ENCODE measurements at regions of chr5 and their contacts with region 1.

Region 1: DNA sequence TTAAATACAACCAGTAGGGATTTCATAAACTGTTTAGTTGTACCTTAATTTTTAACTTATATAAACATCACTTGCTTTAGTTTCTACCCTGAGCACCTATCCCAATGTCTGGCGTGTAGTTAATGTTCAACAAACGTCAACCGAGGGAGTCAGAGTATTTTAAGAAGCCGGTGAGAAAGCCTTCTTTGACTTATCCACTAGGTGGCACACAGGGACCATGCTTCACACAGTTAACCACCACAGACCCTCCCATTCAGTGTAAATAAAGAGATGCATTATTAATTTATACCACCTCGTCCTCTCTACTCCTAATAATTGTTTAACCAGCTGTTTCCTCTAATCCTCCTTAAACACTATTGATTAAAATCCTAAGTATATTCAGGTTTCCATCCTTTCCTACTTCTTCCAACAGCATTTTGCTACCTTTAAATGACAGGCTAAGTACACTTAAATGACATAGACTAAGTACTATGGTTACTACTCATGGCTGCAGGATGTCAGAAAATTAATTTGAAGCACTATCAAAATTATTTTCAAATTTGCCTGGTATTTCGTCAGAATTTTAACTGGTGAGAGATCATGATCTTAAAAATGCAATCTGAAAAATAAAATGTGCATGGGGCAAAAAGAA is 2.3 kb downstream of the HAPLN1 start:
- DNase-seq: peak; percentile 72
- ATAC-seq: peak; percentile 37
- H3K4me3 ChIP-seq: no peak overlapping the region
- H3K27ac ChIP-seq: no peak overlapping the region
- H3K4me1 ChIP-seq: peaks cover 28% of the 10 kb centered on the region
- H3K27me3 ChIP-seq: no peaks in the 10 kb centered on the region
- CTCF ChIP-seq: peak; percentile 82

Region 2: DNA sequence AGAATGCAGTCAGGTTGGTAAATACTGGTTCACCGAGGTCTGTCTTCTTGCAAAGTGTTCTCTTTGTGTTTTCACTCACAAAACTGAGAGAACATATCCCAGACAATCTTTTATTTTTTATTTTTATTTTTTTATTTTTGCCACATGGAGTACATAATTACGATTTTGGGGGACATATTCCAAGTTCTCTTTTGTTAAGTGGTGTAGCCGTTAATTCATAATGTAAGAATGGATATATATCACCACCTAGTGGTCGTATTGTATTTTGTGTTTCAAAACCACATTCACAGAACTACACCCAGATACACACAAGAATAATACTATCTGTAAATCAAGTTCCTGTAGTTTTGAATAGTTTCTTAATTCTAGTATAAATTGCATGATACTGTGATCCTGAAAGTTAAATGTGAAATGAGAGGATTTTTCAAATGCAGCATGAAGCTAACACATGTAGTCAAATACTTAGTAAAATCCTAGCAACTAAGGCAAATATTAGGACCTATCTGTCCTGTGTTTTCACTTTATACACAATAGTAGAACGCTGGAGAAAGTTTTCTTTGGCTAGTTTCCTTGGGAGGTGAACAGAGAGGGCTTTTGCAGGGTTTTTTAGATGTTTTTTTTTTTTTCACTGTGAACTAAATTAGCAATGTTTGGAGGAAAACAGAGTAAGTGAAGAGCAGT is 154.1 kb before region 1 on chr5:
- CTCF ChIA-PET with region 1: no interaction called
- POLR2A ChIA-PET with region 1: no interaction called
- intact Hi-C with region 1: no loop called
- DNase-seq: peak; percentile 70
- ATAC-seq: peak; percentile 63
- H3K4me3 ChIP-seq: peak overlapping the region; percentile 38; the same call in 1 of the 2 replicates
- H3K27ac ChIP-seq: peak overlapping the region; percentile 61
- H3K4me1 ChIP-seq: peaks cover 35% of the 10 kb centered on the region
- H3K27me3 ChIP-seq: no peaks in the 10 kb centered on the region
- CTCF ChIP-seq: peak; percentile 75

Region 3: GRCh38 chr5:83919071-83920041 is 201.0 kb after region 1 on chr5:
- CTCF ChIA-PET with region 1: interaction called, 4 read pairs
- POLR2A ChIA-PET with region 1: no interaction called
- intact Hi-C with region 1: loop called (anchors 5 kb)
- DNase-seq: no peak
- ATAC-seq: no peak
- H3K4me3 ChIP-seq: no peak overlapping the region
- H3K27ac ChIP-seq: no peak overlapping the region
- H3K4me1 ChIP-seq: no peaks in the 10 kb centered on the region; the same call in 1 of the 2 replicates
- H3K27me3 ChIP-seq: no peaks in the 10 kb centered on the region
- CTCF ChIP-seq: no peak

Region 4: DNA sequence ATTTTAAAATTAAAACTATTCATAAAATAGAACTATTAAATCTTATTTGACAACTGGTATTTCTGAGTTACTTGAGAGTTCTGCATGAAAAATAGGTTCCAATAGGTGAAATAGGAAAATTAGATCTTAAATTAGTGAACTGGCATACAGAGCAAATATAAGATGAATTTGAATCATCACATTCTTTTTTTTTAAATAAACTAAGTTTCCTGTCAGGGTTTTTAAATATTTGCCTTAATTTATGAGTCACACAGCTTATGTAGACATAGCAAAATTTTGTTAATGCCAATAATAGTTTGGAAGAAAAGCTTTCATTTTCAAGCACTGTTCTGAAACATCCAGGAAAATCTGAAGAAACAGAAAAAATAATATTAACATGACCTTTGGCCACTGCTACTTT is 314.0 kb after region 1 on chr5:
- CTCF ChIA-PET with region 1: no interaction called
- POLR2A ChIA-PET with region 1: no interaction called
- intact Hi-C with region 1: loop called (anchors 5 kb)
- DNase-seq: peak; percentile 68
- ATAC-seq: peak; percentile 82
- H3K4me3 ChIP-seq: no peak overlapping the region
- H3K27ac ChIP-seq: peak overlapping the region; percentile 90
- H3K4me1 ChIP-seq: peaks cover 34% of the 10 kb centered on the region
- H3K27me3 ChIP-seq: no peaks in the 10 kb centered on the region
- CTCF ChIP-seq: no peak

Region 5: DNA sequence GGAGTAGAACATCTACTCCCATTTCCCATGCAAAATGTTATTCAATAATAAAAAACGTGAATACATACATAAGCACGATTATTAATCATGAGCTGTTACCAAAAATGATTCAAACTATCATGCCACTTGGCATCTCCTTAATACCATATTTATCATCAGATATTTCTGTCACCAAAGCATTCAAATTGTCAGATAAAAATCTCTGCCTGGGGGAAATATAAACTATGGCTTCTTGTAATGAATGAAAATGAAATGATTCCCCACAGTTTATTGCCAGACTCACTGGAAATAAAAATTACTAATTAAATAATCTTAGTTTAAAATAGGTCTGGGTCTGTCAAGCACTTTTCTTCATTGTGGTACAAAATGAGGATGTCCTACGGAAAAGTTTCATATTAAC is 400.9 kb after region 1 on chr5:
- CTCF ChIA-PET with region 1: interaction called, 20 read pairs
- POLR2A ChIA-PET with region 1: no interaction called
- intact Hi-C with region 1: loop called (anchors 10 kb)
- DNase-seq: peak; percentile 74
- ATAC-seq: peak; percentile 74
- H3K4me3 ChIP-seq: no peak overlapping the region
- H3K27ac ChIP-seq: peak overlapping the region; percentile 51
- H3K4me1 ChIP-seq: peaks cover 28% of the 10 kb centered on the region
- H3K27me3 ChIP-seq: no peaks in the 10 kb centered on the region
- CTCF ChIP-seq: no peak

Region 6: DNA sequence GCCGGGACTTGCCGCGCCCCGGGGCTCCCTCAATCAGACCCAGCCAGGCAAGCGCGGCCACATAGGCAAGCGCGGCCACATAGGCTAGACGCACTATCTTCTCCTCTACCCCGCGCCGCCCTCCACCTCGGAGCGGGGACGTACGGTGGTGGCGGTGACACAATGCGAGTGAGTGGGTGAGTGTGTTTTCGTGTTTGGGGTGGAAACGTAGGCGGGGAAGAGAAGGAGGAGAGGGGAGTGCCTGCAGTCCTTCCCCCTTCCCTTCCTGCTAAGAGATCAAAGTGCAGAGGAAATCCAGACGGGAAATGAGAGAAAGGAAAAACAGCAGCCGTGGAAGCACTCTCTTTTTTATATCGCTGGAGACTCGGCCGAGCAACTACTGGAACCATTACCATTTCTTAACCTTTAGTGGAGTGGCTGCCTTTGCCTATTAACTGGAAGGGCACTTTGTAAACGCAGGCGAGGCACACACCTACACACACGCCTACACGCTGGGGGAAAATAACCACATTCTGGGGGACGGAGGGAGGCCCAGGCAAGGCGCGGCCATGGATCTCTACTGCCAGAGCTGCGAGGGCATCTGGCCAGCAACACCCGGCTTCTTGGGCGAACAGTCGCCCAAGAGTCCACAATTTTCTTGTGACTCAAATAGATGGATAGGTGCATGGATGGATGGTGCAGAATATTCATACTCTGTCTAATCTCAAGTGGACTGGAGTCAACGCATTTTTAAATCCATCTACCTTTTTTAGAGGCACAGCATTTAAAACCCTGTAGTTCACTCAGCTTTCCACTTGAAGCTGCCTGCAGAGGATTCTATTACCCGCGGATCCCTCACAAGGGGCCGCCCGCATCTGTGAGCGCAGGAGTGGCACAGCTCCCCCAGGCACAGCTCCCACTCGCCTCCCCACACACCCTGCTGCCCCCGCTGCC is 664.3 kb after region 1 on chr5:
- CTCF ChIA-PET with region 1: no interaction called
- POLR2A ChIA-PET with region 1: interaction called, 3 read pairs
- intact Hi-C with region 1: loop called (anchors 5 kb)
- DNase-seq: no peak
- ATAC-seq: peak; percentile 8
- H3K4me3 ChIP-seq: peak overlapping the region; percentile 77
- H3K27ac ChIP-seq: peak overlapping the region; percentile 46
- H3K4me1 ChIP-seq: peaks cover 15% of the 10 kb centered on the region
- H3K27me3 ChIP-seq: no peaks in the 10 kb centered on the region
- CTCF ChIP-seq: no peak

Region 7: GRCh38 chr5:84450617-84451414 is 732.5 kb after region 1 on chr5:
- CTCF ChIA-PET with region 1: no interaction called
- POLR2A ChIA-PET with region 1: no interaction called
- intact Hi-C with region 1: loop called (anchors 10 kb)
- DNase-seq: peak; percentile 18
- ATAC-seq: peak; percentile 76
- H3K4me3 ChIP-seq: no peak overlapping the region
- H3K27ac ChIP-seq: no peak overlapping the region
- H3K4me1 ChIP-seq: no peaks in the 10 kb centered on the region
- H3K27me3 ChIP-seq: no peaks in the 10 kb centered on the region
- CTCF ChIP-seq: peak; percentile 60

Region 8: GRCh38 chr5:85278183-85278582 is 1559.9 kb after region 1 on chr5:
- CTCF ChIA-PET with region 1: no interaction called
- POLR2A ChIA-PET with region 1: no interaction called
- intact Hi-C with region 1: loop called (anchors 10 kb)
- DNase-seq: peak; percentile 40
- ATAC-seq: peak; percentile 57
- H3K4me3 ChIP-seq: no peak overlapping the region
- H3K27ac ChIP-seq: no peak overlapping the region
- H3K4me1 ChIP-seq: no peaks in the 10 kb centered on the region
- H3K27me3 ChIP-seq: peaks cover 3% of the 10 kb centered on the region; the same call in 1 of the 2 replicates
- CTCF ChIP-seq: no peak